Prostate gland (tissue), 2 donors: ENCODE measurements at regions of chr17 and their contacts with region 1.

Region 1: DNA sequence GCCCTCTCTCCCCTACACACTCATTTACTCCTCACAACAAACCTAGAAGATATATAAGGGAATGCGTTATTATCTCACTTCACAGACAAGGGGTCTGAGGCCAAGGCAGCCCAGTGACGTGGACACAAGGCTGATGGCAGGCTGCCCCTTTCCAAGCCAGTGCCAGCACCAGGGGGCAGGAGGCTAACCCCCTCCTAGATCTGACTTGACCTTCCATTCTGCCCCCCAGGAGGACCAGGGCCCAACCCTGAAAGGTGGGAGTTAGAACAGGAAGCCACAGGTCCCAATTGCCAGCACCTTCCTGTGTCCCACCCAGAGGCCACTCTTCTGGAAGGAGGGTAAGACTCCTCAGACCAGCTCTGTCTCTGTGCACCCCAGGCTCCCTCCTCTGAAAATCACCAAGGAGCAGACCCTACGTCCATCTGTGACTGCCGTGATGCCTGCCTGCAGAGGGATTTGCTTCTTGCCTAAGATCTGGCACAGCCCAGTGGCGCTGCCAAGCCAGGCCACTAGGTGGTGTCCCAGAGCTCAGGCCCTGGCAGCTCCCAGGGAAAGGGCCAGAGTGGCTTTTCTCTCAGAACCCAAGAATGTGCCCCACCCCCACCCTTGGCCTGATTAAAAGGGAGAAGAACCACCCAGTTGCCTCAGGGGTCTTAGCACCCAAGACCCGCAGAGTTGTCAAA is 42.4 kb upstream of the MRPS23 start:
- DNase-seq: peak; percentile 79
- H3K4me3 ChIP-seq: no peak overlapping the region
- H3K27ac ChIP-seq: peak overlapping the region; percentile 71 to 87
- H3K4me1 ChIP-seq: peaks cover 30% of the 10 kb centered on the region
- H3K27me3 ChIP-seq: no peaks in the 10 kb centered on the region
- CTCF ChIP-seq: peak; percentile 85 to 97 (median 95)
- POLR2A ChIP-seq: no peak

Region 2: GRCh38 chr17:57927048-57927723 is 34.9 kb after region 1 on chr17:
- intact Hi-C with region 1: loop called (anchors 5 kb)
- DNase-seq: peak; percentile 86
- H3K4me3 ChIP-seq: no peak overlapping the region
- H3K27ac ChIP-seq: peak overlapping the region; percentile 70 to 76
- H3K4me1 ChIP-seq: peaks cover 35% of the 10 kb centered on the region
- H3K27me3 ChIP-seq: no peaks in the 10 kb centered on the region
- CTCF ChIP-seq: no peak
- POLR2A ChIP-seq: no peak

Region 3: GRCh38 chr17:57955183-57955931 is 63.1 kb after region 1 on chr17 and contains the start of gene CUEDC1:
- intact Hi-C with region 1: loop called (anchors 2 kb)
- DNase-seq: peak; percentile 67
- H3K4me3 ChIP-seq: peak within 1 kb of the TSS; percentile 93 to 94
- H3K27ac ChIP-seq: peak within 1 kb of the TSS; percentile 96 to 97
- H3K4me1 ChIP-seq: peaks cover 3% of the 10 kb centered on the region
- H3K27me3 ChIP-seq: no peaks in the 10 kb centered on the region
- CTCF ChIP-seq: peak in 2 of 4 experiments; percentile 26 to 48
- POLR2A ChIP-seq: no peak
- total RNA-seq, gene CUEDC1: 33.0 to 44.9 TPM

Region 4: GRCh38 chr17:57987580-57988421 is 95.5 kb after region 1 on chr17 and contains the start of gene VEZF1:
- intact Hi-C with region 1: loop called (anchors 5 kb)
- DNase-seq: peak; percentile 65
- H3K4me3 ChIP-seq: peak within 1 kb of the TSS; percentile 80
- H3K27ac ChIP-seq: peak within 1 kb of the TSS; percentile 93 to 96
- H3K4me1 ChIP-seq: peaks cover 4% of the 10 kb centered on the region
- H3K27me3 ChIP-seq: no peaks in the 10 kb centered on the region
- CTCF ChIP-seq: no peak
- POLR2A ChIP-seq: peak; percentile 42
- total RNA-seq, gene VEZF1: 84.9 to 91.1 TPM